ENCODE measurements at regions of chr2 and their contacts with region 1.

Region 1: DNA sequence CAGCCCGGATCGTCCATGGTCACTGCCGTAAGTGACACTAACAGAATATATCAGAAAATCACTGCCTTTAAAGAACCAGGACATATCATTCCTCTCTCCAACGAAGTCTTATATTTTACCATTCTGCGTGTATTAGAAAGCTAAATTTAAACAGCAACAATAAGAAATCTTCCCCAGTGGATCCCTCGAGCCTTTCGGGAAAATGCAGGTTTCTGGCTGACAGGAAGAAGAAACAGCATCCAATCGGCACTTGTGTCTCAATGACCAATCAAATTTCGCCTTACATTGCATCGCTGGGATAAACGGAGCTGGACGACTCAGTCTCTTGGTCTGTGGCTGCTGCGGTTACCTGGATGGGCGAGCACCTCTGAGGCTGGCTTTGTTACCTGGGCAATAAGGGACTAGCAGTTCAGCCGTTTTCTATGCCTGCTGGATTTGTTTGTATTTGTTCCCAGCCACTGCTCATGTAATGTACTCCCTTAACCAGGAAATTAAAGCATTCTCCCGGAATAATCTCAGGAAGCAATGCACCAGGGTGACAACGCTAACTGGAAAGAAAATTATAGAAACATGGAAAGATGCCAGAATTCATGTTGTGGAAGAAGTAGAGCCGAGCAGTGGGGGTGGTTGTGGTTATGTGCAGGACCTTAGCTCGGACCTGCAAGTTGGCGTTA is at the start of gene DUSP19:
- DNase-seq: peak; percentile 26 to 88 (median 57)
- ATAC-seq: peak; percentile 73 to 87 (median 80)
- H3K4me3 ChIP-seq: peak within 1 kb of the TSS; percentile 62 to 77
- H3K4me3 Mint-ChIP-seq: peak within 1 kb of the TSS; percentile 86 to 92 (median 91)
- H3K27ac ChIP-seq: no peak within 1 kb of the TSS
- H3K27ac Mint-ChIP-seq: peak within 1 kb of the TSS; percentile 60 to 83
- H3K4me1 ChIP-seq: peaks cover 2 to 5% of the 10 kb centered on the region in 2 experiments
- H3K4me1 Mint-ChIP-seq: peaks cover 5 to 6% (median 6%) of the 10 kb centered on the region in 3 donors
- H3K27me3 ChIP-seq: peaks cover 0 to 4% of the 10 kb centered on the region in 2 experiments
- H3K27me3 Mint-ChIP-seq: no peaks in the 10 kb centered on the region
- total RNA-seq, gene DUSP19: 1.3 to 2.5 (median 2.0) TPM

Region 2: GRCh38 chr2:182818541-182819324 is 259.9 kb before region 1 on chr2:
- CTCF ChIA-PET with region 1: no interaction called
- POLR2A ChIA-PET with region 1: no interaction called
- DNase-seq: no peak
- ATAC-seq: no peak
- H3K4me3 ChIP-seq: no peak overlapping the region
- H3K4me3 Mint-ChIP-seq: no peak overlapping the region
- H3K27ac ChIP-seq: no peak overlapping the region
- H3K27ac Mint-ChIP-seq: no peak overlapping the region
- H3K4me1 ChIP-seq: no peaks in the 10 kb centered on the region
- H3K4me1 Mint-ChIP-seq: no peaks in the 10 kb centered on the region
- H3K27me3 ChIP-seq: peaks cover 0 to 7% of the 10 kb centered on the region in 2 experiments
- H3K27me3 Mint-ChIP-seq: peaks cover 7 to 9% of the 10 kb centered on the region in 2 donors

Region 3: DNA sequence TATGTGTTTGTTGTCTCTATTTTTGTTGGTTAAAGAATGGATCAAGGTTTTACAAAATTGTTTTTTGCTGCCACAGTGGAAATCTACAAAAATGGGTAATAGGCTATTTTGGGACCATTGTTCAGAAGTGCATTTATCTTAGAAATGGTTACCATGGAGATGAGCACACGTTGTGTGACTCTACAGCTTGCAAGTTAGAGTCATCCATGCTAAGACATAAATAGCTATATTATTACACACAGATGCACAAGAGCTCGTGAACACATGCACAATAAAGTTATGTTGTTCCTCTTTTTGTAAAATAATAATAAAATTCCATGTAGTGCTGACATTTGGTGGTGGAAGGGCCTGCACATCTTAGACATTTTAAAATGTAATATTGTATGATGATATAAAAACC is 15.5 kb before region 1 on chr2:
- CTCF ChIA-PET with region 1: interaction called in 1 of 2 experiments, 11 read pairs
- POLR2A ChIA-PET with region 1: no interaction called
- DNase-seq: no peak
- ATAC-seq: no peak
- H3K4me3 ChIP-seq: no peak overlapping the region
- H3K4me3 Mint-ChIP-seq: no peak overlapping the region
- H3K27ac ChIP-seq: no peak overlapping the region
- H3K27ac Mint-ChIP-seq: no peak overlapping the region
- H3K4me1 ChIP-seq: no peaks in the 10 kb centered on the region
- H3K4me1 Mint-ChIP-seq: no peaks in the 10 kb centered on the region
- H3K27me3 ChIP-seq: peaks cover 0 to 23% of the 10 kb centered on the region in 2 experiments
- H3K27me3 Mint-ChIP-seq: peaks cover 29 to 32% of the 10 kb centered on the region in 2 donors

Measured in T-cell (primary cell).